Activated naive CD4-positive, alpha-beta T cell treated with anti-CD3 and anti-CD28 coated beads, Interleukin-2, amount 10 ng/mL, durations not matched to agents 7 days and 5 days (primary cell): ENCODE measurements at regions of chr10 and their contacts with region 1.

Region 1: GRCh38 chr10:2927958-2928840 is 139.1 kb upstream of the PFKP start:
- DNase-seq: peak; percentile 81
- H3K4me3 Mint-ChIP-seq: no peak overlapping the region
- H3K27ac Mint-ChIP-seq: peak overlapping the region; percentile 30
- H3K4me1 Mint-ChIP-seq: peaks cover 7% of the 10 kb centered on the region
- H3K27me3 Mint-ChIP-seq: peaks cover 13% of the 10 kb centered on the region

Region 2: DNA sequence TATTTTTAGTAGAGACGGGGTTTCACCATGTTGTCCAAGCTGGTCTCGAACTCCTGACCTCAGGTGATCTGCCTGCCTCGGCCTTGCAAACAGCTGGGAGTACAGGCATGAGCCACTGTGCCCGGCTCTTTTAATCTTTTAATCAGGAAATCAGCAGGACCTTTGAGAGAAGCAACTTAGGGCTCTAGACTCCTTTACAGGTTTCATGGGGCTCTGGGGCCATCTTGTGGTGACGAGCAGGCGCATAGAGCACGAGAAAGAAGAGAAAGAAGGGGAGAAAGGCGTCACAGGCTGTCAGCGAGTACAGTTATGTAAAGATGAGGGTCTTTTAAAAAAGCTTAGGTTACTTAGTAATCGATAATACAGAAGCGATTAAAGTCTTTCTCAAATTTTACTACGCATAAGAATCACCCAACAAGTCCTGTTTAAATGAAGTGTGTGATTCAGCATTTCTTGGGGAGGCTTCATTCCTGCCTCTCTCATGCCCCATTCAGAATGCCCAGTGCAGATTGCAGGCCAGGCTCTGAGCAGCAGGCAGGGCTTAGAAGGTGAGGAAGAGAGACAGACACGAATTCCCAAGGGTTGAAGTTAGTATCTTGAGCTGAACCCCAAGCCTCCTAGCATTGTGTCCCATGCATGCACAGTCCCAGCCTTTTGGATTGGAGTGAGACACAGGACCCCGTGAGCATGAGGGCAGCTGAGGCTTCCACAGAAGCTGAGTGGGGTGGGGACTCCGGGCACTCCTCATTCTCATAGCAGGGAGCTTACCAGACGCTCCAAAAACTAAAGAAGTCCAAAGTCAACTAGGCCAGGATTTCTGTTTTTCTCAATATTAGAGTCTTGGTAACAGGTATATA is 115.5 kb after region 1 on chr10:
- CTCF ChIA-PET with region 1: interaction called, 44 read pairs
- DNase-seq: peak; percentile 68
- H3K4me3 Mint-ChIP-seq: no peak overlapping the region
- H3K27ac Mint-ChIP-seq: no peak overlapping the region
- H3K4me1 Mint-ChIP-seq: no peaks in the 10 kb centered on the region
- H3K27me3 Mint-ChIP-seq: peaks cover 42% of the 10 kb centered on the region